HepG2 (cell line): ENCODE measurements at regions of chr15 and their contacts with region 1.

Region 1: GRCh38 chr15:63048115-63048775 is 5.7 kb downstream of the TPM1 start:
- DNase-seq: peak; percentile 93
- ATAC-seq: peak; percentile 93
- H3K4me3 ChIP-seq: peak overlapping the region; percentile 67 to 86 (median 80)
- H3K27ac ChIP-seq: peak overlapping the region; percentile 67
- H3K4me1 ChIP-seq: peaks cover 82% of the 10 kb centered on the region
- H3K27me3 ChIP-seq: no peaks in the 10 kb centered on the region
- CTCF ChIP-seq: peak; percentile 91
- EP300 ChIP-seq: no peak; a peak in 2 of 4 replicates
- POLR2A ChIP-seq: peak; percentile 46 to 78
- RAD21 ChIP-seq: peak; percentile 100

Region 2: GRCh38 chr15:62880278-62880677 is 168.0 kb before region 1 on chr15:
- CTCF ChIA-PET with region 1: no interaction called
- POLR2A ChIA-PET with region 1: no interaction called
- in situ Hi-C with region 1: no loop called
- intact Hi-C with region 1: no loop called
- DNase-seq: no peak
- ATAC-seq: no peak
- H3K4me3 ChIP-seq: no peak overlapping the region
- H3K27ac ChIP-seq: no peak overlapping the region
- H3K4me1 ChIP-seq: peaks cover 48% of the 10 kb centered on the region
- H3K27me3 ChIP-seq: no peaks in the 10 kb centered on the region
- CTCF ChIP-seq: no peak
- EP300 ChIP-seq: no peak
- POLR2A ChIP-seq: no peak
- RAD21 ChIP-seq: no peak

Region 3: DNA sequence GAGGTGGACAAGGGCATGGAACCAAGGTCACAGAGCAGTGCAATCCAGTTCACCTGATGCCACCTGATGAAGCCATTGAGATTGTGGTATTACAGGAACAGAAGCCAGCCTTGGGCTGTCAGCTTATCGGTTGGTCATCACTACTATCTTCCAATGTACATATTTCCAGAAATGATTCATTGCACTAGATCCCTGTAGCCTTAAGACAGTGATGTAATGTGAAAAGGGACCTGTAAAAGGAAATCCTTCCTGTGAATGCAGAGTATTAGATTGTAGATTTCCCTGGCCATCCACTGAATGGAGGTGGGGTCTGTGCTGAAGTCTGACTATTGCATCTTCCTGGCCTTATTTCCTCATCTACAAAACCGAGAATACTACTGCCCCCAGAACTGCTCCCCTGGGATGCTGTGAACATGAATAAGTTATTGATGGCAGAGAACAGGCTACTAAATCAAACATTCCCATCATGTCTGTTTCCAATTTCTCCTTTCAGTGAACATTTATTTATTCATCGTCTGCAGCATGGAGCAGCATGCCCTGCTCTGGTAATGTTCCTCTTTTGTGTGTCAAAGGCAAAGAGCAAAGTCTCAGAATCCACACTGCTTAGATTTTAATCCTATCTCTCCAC is 53.1 kb before region 1 on chr15:
- CTCF ChIA-PET with region 1: no interaction called
- POLR2A ChIA-PET with region 1: interaction called, 5 read pairs
- in situ Hi-C with region 1: no loop called
- intact Hi-C with region 1: loop called (anchors 10 kb)
- DNase-seq: no peak
- ATAC-seq: no peak
- H3K4me3 ChIP-seq: no peak overlapping the region
- H3K27ac ChIP-seq: no peak overlapping the region
- H3K4me1 ChIP-seq: peaks cover 72% of the 10 kb centered on the region
- H3K27me3 ChIP-seq: no peaks in the 10 kb centered on the region
- CTCF ChIP-seq: no peak
- EP300 ChIP-seq: no peak
- POLR2A ChIP-seq: no peak
- RAD21 ChIP-seq: no peak

Region 4: GRCh38 chr15:63093486-63094205 is 45.4 kb after region 1 on chr15:
- CTCF ChIA-PET with region 1: interaction called, 57 read pairs
- POLR2A ChIA-PET with region 1: interaction called, 42 read pairs
- in situ Hi-C with region 1: loop called (anchors 5 kb)
- intact Hi-C with region 1: loop called (anchors 1 kb)
- DNase-seq: peak; percentile 77
- ATAC-seq: peak; percentile 94
- H3K4me3 ChIP-seq: no peak overlapping the region
- H3K27ac ChIP-seq: no peak overlapping the region
- H3K4me1 ChIP-seq: peaks cover 61% of the 10 kb centered on the region
- H3K27me3 ChIP-seq: no peaks in the 10 kb centered on the region
- CTCF ChIP-seq: peak; percentile 97
- EP300 ChIP-seq: peak in 1 of 2 experiments; percentile 42; a peak in 1 of 4 replicates
- POLR2A ChIP-seq: no peak
- RAD21 ChIP-seq: peak; percentile 98

Region 5: DNA sequence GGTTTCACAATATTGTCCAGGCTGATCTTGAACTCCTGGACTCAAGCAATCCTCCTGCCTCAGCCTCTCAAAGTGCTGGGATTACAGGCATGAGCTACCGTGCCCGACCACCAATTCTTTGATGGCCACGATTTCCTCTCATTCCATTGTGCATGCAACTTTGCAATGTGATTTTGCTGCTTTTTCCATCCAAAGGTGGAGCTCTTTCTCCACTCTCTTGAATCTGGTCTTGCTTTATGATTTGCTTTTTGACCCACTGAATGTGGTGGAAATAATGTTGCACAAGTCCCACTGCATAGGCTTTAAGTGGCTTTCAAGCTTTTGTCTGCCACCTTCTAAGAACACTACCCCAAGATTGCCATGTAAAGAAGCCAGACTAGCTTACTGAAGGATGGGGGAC is 98.4 kb after region 1 on chr15:
- CTCF ChIA-PET with region 1: no interaction called
- POLR2A ChIA-PET with region 1: no interaction called
- in situ Hi-C with region 1: no loop called
- intact Hi-C with region 1: no loop called
- DNase-seq: no peak
- ATAC-seq: peak; percentile 22; the same call in 2 of the 3 replicates
- H3K4me3 ChIP-seq: no peak overlapping the region
- H3K27ac ChIP-seq: no peak overlapping the region
- H3K4me1 ChIP-seq: no peaks in the 10 kb centered on the region
- H3K27me3 ChIP-seq: no peaks in the 10 kb centered on the region
- CTCF ChIP-seq: peak; percentile 23
- EP300 ChIP-seq: no peak
- POLR2A ChIP-seq: no peak; a peak in 1 of 4 replicates
- RAD21 ChIP-seq: no peak

Region 6: GRCh38 chr15:63157118-63157843 is 109.0 kb after region 1 on chr15 and contains the start of gene RPS27L:
- CTCF ChIA-PET with region 1: no interaction called
- POLR2A ChIA-PET with region 1: interaction called, 21 read pairs
- in situ Hi-C with region 1: no loop called
- intact Hi-C with region 1: loop called (anchors 5 kb)
- DNase-seq: peak; percentile 88
- ATAC-seq: peak; percentile 98
- H3K4me3 ChIP-seq: peak within 1 kb of the TSS; percentile 78 to 96 (median 96)
- H3K27ac ChIP-seq: peak within 1 kb of the TSS; percentile 89
- H3K4me1 ChIP-seq: peaks cover 24% of the 10 kb centered on the region
- H3K27me3 ChIP-seq: no peaks in the 10 kb centered on the region; a peak in 1 of 5 replicates
- CTCF ChIP-seq: no peak
- EP300 ChIP-seq: no peak; a peak in 1 of 4 replicates
- POLR2A ChIP-seq: peak; percentile 91 to 95
- RAD21 ChIP-seq: peak; percentile 43; the same call in 1 of the 2 replicates
- total RNA-seq, gene RPS27L: 433 and 596 TPM in 2 replicates